Mammary epithelial cell (primary cell): ENCODE measurements at regions of chr7 and their contacts with region 1.

Region 1: DNA sequence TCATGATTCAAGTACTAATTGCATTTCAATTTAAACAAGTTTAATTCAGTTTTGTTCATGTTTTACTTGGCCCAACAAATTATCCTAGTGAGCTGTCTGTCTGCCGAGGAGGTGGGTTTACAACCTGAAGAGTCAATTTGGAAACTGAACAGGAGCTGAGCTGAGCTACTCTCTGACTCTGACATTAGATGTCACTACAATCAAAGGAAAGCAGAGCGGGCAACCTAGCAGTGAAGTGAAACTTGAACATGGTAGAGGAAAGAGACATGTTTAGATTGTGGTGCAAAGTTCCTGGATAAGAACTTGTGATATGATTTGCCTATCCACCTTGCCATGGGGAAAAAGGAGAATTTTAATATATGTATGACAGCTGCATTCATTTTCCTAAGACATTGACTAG is 9.6 kb upstream of the AGR3 start:
- DNase-seq: peak; percentile 56
- H3K4me3 ChIP-seq: no peak overlapping the region
- H3K27ac ChIP-seq: no peak overlapping the region
- H3K4me1 ChIP-seq: peaks cover 7% of the 10 kb centered on the region
- H3K27me3 ChIP-seq: no peaks in the 10 kb centered on the region
- CTCF ChIP-seq: peak; percentile 72 to 76

Region 2: DNA sequence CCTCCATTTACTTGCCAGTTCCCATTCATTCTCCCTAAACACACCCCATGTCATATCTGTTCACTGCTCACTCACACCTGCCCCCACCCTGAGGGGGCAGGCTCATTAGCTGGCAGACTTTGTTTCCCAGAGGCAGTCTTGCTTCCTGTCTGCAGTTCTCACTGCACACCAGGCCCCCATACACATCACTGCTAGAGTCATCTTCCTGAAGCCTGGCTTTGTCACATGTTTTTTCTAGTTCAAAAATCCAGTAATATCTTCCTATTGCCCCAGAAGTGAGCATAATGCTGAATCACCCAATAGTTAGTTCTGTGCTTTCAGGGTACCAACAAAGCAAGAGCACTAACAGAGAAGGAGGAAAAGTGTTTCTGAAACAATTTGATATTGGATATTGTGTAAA is 362.8 kb before region 1 on chr7:
- CTCF ChIA-PET with region 1: no interaction called
- dilution Hi-C with region 1: no loop called
- in situ Hi-C with region 1: no loop called
- intact Hi-C with region 1: no loop called
- DNase-seq: no peak
- H3K4me3 ChIP-seq: no peak overlapping the region
- H3K27ac ChIP-seq: no peak overlapping the region
- H3K4me1 ChIP-seq: peaks cover 5% of the 10 kb centered on the region
- H3K27me3 ChIP-seq: no peaks in the 10 kb centered on the region
- CTCF ChIP-seq: no peak

Region 3: GRCh38 chr7:16695621-16696237 is 195.6 kb before region 1 on chr7:
- CTCF ChIA-PET with region 1: no interaction called
- dilution Hi-C with region 1: no loop called
- in situ Hi-C with region 1: no loop called
- intact Hi-C with region 1: loop called (anchors 1 kb)
- DNase-seq: peak; percentile 47
- H3K4me3 ChIP-seq: no peak overlapping the region
- H3K27ac ChIP-seq: no peak overlapping the region
- H3K4me1 ChIP-seq: no peaks in the 10 kb centered on the region
- H3K27me3 ChIP-seq: no peaks in the 10 kb centered on the region
- CTCF ChIP-seq: peak; percentile 66 to 67

Region 4: DNA sequence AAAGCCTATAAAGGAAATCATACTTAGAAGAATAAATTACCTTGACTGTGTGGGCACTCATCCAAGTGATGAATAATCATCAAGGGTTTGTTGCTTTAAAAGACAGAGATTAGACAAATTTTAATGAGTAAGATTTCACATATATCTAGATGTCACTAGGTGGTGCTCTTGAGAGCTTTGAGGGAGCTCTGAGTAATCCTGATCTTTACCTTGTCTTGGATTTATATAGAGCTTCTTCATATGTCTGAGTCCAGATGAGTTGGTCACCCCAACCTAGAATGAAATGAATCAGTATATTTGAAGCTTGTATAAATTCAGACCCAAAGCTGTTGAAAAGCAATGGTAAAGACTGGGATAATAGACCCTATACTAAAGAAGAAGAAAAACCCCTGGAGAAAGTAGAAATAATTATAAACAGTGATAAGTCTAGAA is 90.2 kb before region 1 on chr7:
- CTCF ChIA-PET with region 1: interaction called, 4 read pairs
- dilution Hi-C with region 1: no loop called
- in situ Hi-C with region 1: no loop called
- intact Hi-C with region 1: loop called (anchors 2 kb)
- DNase-seq: peak; percentile 90
- H3K4me3 ChIP-seq: no peak overlapping the region
- H3K27ac ChIP-seq: no peak overlapping the region
- H3K4me1 ChIP-seq: peaks cover 22% of the 10 kb centered on the region
- H3K27me3 ChIP-seq: no peaks in the 10 kb centered on the region
- CTCF ChIP-seq: peak; percentile 56 to 62

Region 5: GRCh38 chr7:16918288-16918895 is 27.1 kb after region 1 on chr7:
- CTCF ChIA-PET with region 1: interaction called, 3 read pairs
- dilution Hi-C with region 1: no loop called
- in situ Hi-C with region 1: no loop called
- intact Hi-C with region 1: loop called (anchors 1 kb)
- DNase-seq: peak; percentile 25
- H3K4me3 ChIP-seq: no peak overlapping the region
- H3K27ac ChIP-seq: no peak overlapping the region
- H3K4me1 ChIP-seq: peaks cover 36% of the 10 kb centered on the region
- H3K27me3 ChIP-seq: no peaks in the 10 kb centered on the region
- CTCF ChIP-seq: peak; percentile 51 to 63

Region 6: DNA sequence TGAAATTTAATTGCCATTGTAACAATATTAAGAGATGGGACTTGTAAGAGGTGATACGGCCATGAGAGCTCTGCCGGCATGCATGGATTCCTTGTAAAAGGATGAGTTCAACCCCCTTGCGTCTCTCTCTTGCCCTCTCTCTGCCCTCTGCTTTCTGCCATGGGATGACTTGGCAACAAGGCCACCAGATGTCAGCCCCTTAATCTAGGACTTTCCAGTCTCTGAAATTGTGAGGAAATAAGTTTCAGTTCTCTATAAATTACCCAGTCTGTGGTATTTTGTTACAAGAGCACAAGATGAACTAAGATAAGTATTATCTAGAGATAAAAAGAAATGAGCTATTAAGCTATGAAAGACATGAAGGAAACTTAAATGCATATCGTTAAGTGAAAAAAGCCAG is 261.4 kb after region 1 on chr7:
- CTCF ChIA-PET with region 1: no interaction called
- dilution Hi-C with region 1: no loop called
- in situ Hi-C with region 1: no loop called
- intact Hi-C with region 1: loop called (anchors 10 kb)
- DNase-seq: no peak
- H3K4me3 ChIP-seq: no peak overlapping the region
- H3K27ac ChIP-seq: no peak overlapping the region
- H3K4me1 ChIP-seq: no peaks in the 10 kb centered on the region
- H3K27me3 ChIP-seq: no peaks in the 10 kb centered on the region
- CTCF ChIP-seq: no peak

Region 7: GRCh38 chr7:17646253-17646956 is 755.1 kb after region 1 on chr7:
- CTCF ChIA-PET with region 1: no interaction called
- dilution Hi-C with region 1: no loop called
- in situ Hi-C with region 1: no loop called
- intact Hi-C with region 1: loop called (anchors 1 kb)
- DNase-seq: peak; percentile 57
- H3K4me3 ChIP-seq: no peak overlapping the region
- H3K27ac ChIP-seq: no peak overlapping the region
- H3K4me1 ChIP-seq: peaks cover 8% of the 10 kb centered on the region
- H3K27me3 ChIP-seq: no peaks in the 10 kb centered on the region
- CTCF ChIP-seq: peak; percentile 40 to 53